ENCODE measurements at regions of chr5 and their contacts with region 1.

Region 1: GRCh38 chr5:176492431-176492830 is 44.2 kb downstream of the FAF2 start:
- DNase-seq: peak; percentile 86
- H3K4me3 Mint-ChIP-seq: peak overlapping the region; percentile 17
- H3K27ac Mint-ChIP-seq: peak overlapping the region; percentile 63
- H3K4me1 Mint-ChIP-seq: peaks cover 30% of the 10 kb centered on the region
- H3K27me3 Mint-ChIP-seq: no peaks in the 10 kb centered on the region
- CTCF ChIP-seq: no peak

Region 2: GRCh38 chr5:176466245-176466871 is 26.1 kb before region 1 on chr5:
- CTCF ChIA-PET with region 1: interaction called, 4 read pairs
- POLR2A ChIA-PET with region 1: interaction called, 16 read pairs
- intact Hi-C with region 1: no loop called
- DNase-seq: peak; percentile 84
- H3K4me3 Mint-ChIP-seq: peak overlapping the region; percentile 11
- H3K27ac Mint-ChIP-seq: peak overlapping the region; percentile 24
- H3K4me1 Mint-ChIP-seq: peaks cover 35% of the 10 kb centered on the region
- H3K27me3 Mint-ChIP-seq: no peaks in the 10 kb centered on the region
- CTCF ChIP-seq: no peak

Region 3: GRCh38 chr5:176474510-176474909 is 17.9 kb before region 1 on chr5:
- CTCF ChIA-PET with region 1: interaction called, 3 read pairs
- POLR2A ChIA-PET with region 1: interaction called, 19 read pairs
- intact Hi-C with region 1: no loop called
- DNase-seq: peak; percentile 18
- H3K4me3 Mint-ChIP-seq: no peak overlapping the region
- H3K27ac Mint-ChIP-seq: no peak overlapping the region
- H3K4me1 Mint-ChIP-seq: peaks cover 14% of the 10 kb centered on the region
- H3K27me3 Mint-ChIP-seq: no peaks in the 10 kb centered on the region
- CTCF ChIP-seq: no peak

Measured in MCF 10A (cell line).